Activated naive CD8-positive, alpha-beta T cell treated with anti-CD3 and anti-CD28 coated beads, Interleukin-2, amount 10 ng/mL, durations not matched to agents 7 days and 5 days (primary cell): ENCODE measurements at regions of chr20 and their contacts with region 1.

Region 1: DNA sequence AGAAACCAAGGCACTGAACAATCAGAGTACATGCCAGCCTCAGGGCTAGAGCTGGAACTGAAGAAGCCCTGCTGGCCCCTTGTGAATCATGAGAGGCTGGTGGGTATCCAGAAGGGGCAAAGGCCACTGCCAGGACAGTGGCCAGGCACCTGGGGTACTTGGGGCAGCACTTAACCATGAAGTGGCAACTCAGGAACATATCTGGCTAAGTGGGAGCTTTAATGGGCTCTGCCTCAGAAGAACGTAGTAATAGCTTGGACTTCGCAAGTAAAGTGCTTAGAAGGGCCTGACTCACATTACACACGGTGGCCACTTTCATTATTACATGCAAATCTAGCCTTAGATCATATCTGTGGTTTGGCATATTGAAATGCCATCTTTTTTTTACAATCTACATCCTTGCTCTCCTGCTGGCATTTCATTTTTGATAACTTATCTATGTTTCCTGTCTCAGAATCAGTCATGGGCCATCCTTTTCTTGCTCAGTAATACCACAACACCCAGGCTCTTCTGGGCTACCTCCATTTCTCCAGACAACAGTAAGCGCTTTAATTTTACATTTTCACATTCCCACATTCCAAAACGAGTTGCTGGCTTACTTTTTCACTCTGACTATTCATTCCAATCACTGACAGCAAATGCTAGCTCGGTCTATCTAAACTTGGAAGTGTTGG is 21.6 kb downstream of the NAPB start:
- DNase-seq: no peak
- ATAC-seq: peak; percentile 69
- H3K4me3 Mint-ChIP-seq: peak overlapping the region; percentile 2
- H3K27ac Mint-ChIP-seq: peak overlapping the region; percentile 78
- H3K4me1 Mint-ChIP-seq: peaks cover 41% of the 10 kb centered on the region
- H3K27me3 Mint-ChIP-seq: no peaks in the 10 kb centered on the region

Region 2: DNA sequence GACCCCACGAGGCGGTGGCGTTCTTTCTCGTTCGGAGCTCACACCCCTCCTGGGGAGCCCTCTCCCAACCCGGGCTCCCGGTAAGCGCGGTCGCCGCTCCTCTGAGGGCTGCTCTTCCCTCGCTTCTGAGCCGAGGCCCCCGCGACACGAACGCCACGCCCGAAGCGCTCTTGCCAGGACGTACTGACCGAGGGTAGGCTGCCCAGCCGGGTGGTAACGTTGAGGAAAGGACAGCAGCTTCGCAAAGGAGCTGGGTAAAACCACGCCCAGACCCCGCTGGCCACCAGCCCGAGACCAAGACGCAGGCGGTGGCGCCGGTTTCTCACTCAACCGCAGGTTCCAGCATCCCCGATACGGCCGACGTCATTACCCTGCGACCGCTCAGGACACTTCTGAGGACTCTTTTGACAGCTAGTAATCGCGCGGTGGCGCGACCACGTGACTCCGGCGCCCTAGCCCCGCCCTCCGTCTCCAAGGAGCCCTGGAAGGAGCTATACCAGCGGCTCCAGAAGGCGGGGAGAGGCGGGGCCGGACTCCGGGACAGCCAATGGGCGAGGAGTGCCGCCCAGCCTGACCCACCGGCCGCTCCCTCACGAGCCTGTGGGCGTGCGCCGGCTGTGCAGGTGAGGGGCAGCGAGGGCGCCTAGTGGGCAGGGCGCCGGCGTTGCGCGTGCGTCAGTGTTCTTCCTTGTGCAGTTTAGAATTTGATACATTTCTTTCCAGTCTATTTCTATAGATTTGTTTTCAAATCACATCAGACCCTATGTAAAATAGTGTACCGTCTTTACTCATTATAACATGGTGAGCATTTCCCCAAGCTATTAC is 41.7 kb before region 1 on chr20:
- POLR2A ChIA-PET with region 1: interaction called, 12 read pairs
- DNase-seq: peak; percentile 99
- ATAC-seq: peak; percentile 82
- H3K4me3 Mint-ChIP-seq: peak overlapping the region; percentile 90
- H3K27ac Mint-ChIP-seq: peak overlapping the region; percentile 96
- H3K4me1 Mint-ChIP-seq: peaks cover 11% of the 10 kb centered on the region
- H3K27me3 Mint-ChIP-seq: no peaks in the 10 kb centered on the region

Region 3: GRCh38 chr20:23386304-23387117 is 13.2 kb before region 1 on chr20:
- POLR2A ChIA-PET with region 1: no interaction called
- DNase-seq: no peak
- ATAC-seq: no peak
- H3K4me3 Mint-ChIP-seq: no peak overlapping the region
- H3K27ac Mint-ChIP-seq: no peak overlapping the region
- H3K4me1 Mint-ChIP-seq: peaks cover 14% of the 10 kb centered on the region
- H3K27me3 Mint-ChIP-seq: no peaks in the 10 kb centered on the region